Left ventricle myocardium superior (tissue), 1 donor: ENCODE measurements at regions of chr17 and their contacts with region 1.

Region 1: DNA sequence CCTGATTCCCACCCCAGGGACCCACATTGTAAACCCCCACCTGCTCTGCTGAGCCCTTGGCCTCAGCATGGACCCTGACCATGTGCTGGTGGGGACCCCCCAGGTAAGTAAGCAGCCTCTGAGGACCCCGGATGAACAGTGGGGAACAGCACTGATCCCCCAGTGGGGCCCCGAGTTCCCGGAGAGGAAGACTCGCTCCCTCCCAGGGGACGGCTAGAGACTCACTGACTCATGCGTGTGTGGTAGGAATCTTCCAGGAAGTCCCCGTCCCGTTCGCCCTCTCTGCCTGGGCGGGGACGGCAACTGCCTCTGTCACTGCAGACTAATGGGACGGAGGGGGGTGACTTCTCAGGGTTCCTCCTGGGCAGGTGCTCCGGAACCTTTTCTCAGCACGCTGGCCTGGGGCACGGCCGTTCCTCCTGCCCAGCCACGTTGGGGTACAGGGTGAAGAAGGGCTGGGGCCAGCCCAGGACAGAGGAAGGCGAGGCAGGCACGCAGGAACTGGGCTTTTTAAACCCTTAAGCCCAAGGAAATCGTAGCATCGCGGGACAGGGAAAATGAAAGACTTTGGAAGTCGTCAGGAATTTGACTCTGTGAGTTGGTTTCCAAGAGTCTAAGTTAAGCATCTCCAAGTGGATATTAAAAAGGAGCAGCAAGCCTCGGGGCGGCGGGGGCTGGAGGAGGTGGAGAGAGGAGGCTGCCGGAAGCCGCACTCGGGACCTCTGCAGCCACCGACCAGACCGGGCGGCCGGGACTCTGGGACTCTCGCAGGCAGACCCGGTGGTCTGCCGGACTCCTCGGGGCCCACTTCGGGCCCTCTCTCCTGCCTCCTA is 178.7 kb downstream of the SEC14L1 start:
- DNase-seq: peak; percentile 84
- ATAC-seq: peak; percentile 69

Region 2: DNA sequence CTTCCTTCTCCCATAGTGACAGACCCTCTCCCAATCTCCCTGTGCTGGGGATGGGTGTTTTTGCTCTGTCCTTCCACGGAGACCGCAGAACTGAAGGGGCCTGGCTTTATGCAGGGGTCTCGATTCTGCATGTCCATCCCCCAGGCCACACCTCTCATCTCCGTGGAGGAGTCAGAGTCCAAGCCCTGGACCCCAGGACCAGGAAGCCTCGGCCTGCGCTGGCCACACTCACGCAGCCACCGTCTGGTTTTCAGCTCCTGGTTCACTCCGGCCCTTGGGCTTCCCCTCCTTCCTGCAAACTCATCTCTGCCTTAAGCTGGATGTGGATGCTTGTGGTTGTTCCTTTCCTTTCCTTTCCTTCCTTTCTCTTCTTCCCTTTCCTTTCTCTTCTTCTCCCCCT is 360.5 kb before region 1 on chr17:
- intact Hi-C with region 1: no loop called
- DNase-seq: no peak
- ATAC-seq: no peak

Region 3: DNA sequence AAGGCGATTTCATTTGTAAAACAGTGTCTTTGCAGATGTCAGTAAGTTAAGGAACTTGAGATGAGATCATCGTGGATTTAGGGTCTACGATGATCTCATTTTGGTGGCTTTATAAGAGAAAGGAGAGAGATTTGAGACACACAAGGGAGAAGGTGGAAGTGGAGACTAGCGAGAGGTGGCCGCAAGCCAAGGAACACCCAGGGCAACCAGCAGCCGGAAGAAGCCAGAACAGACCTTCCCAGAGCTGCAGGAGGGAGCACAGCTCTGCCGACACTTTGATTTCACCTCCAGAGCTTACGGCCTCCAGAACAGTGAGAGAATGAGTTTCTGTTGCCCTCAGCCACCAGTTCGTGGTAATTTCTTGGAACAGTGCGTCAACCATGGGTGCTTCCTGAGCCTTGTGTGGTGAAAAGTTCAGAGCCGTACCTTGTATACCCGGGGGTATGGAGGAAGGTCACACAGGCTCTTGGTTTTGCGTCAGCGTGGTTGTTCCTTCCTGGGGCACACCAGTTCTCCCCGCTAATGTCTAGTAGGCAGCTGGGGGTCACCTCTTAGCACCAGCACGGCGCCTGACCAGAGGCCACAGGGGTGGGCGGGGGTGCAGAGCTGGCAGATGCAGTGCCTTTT is 191.6 kb before region 1 on chr17:
- intact Hi-C with region 1: no loop called
- DNase-seq: peak; percentile 84
- ATAC-seq: peak; percentile 68

Region 4: GRCh38 chr17:77365584-77366186 is 46.3 kb after region 1 on chr17:
- intact Hi-C with region 1: no loop called
- DNase-seq: peak; percentile 65
- ATAC-seq: peak; percentile 67

Region 5: GRCh38 chr17:77429919-77430752 is 110.7 kb after region 1 on chr17:
- intact Hi-C with region 1: loop called (anchors 10 kb)
- DNase-seq: peak; percentile 93
- ATAC-seq: peak; percentile 81